Activated T-helper 2 cell treated with anti-CD3 and anti-CD28 coated beads, Interferon-gamma antibody, Interleukin-2, Interleukin-4, amounts not matched to agents 10 μg/mL and 5 μg/mL and 100 μg/mL, durations not matched to agents 14 hours and 24 hours and 36 hours (primary cell): ENCODE measurements at regions of chr15 and their contacts with region 1.

Region 1: DNA sequence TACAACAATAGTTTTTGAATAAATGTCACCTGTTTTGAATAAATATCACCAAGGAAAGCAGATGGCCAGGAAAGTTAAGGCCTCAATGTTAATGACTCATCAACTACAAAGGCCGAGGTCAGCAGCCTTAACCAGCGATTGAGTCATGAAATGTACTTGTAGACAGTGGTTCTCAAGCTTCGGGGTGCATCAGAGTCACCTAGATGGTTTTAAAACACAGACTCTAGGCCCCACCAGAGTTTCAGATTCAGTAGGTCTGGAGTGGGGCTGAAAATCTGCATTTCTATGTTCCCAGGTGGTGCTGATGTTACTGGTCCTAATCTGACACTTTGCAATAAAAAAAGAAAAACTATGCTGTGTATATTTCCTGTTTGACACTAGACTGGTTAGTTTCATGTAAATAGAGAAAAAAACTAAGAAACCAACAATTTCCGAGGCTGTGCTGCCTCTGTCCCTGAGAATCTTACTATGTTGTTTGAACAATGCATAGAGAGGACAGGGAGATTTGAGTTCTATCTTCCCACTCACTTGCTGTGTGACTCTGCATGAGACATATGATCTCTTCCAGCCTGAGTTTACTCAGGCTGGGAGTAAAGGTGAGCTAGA is 9.8 kb downstream of the RAB27A start:
- DNase-seq: peak; percentile 46
- H3K4me3 Mint-ChIP-seq: peak overlapping the region; percentile 63
- H3K27ac Mint-ChIP-seq: peak overlapping the region; percentile 98
- H3K4me1 Mint-ChIP-seq: peaks cover 88% of the 10 kb centered on the region
- H3K27me3 Mint-ChIP-seq: no peaks in the 10 kb centered on the region

Region 2: GRCh38 chr15:55221090-55222011 is 58.5 kb before region 1 on chr15:
- intact Hi-C with region 1: loop called (anchors 1 kb)
- DNase-seq: no peak
- H3K4me3 Mint-ChIP-seq: peak overlapping the region; percentile 23
- H3K27ac Mint-ChIP-seq: peak overlapping the region; percentile 89
- H3K4me1 Mint-ChIP-seq: peaks cover 61% of the 10 kb centered on the region
- H3K27me3 Mint-ChIP-seq: no peaks in the 10 kb centered on the region

Region 3: GRCh38 chr15:55255714-55256113 is 24.1 kb before region 1 on chr15:
- intact Hi-C with region 1: loop called (anchors 1 kb)
- DNase-seq: no peak
- H3K4me3 Mint-ChIP-seq: peak overlapping the region; percentile 72
- H3K27ac Mint-ChIP-seq: peak overlapping the region; percentile 82
- H3K4me1 Mint-ChIP-seq: peaks cover 66% of the 10 kb centered on the region
- H3K27me3 Mint-ChIP-seq: no peaks in the 10 kb centered on the region

Region 4: DNA sequence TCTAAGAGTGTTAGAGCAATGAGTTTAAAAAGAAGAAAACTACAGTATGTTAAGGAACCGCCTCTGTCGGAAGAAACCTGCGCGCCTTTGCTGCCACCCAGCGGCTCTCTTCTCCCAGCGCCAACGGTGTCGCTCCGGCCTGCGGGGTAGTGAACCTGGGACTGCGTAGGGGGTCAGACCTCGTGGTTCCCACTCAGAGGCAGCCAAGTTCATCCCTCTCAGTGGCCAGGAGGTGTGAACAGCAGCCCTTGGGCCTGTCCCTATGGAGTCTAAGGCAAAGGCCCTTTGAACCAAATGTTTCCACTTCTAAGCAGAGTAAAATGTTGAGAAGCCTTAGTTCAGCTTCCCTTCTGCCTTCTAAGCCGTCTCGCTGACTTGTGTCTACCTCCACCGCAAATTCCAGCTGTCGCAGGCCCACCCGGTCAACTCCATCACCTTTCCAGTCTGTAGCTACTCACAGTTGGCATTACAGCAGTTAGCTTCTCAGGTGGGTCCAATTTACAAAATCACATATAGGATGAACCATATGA is 10.7 kb after region 1 on chr15:
- intact Hi-C with region 1: loop called (anchors 1 kb)
- DNase-seq: peak; percentile 77
- H3K4me3 Mint-ChIP-seq: peak overlapping the region; percentile 78
- H3K27ac Mint-ChIP-seq: peak overlapping the region; percentile 83
- H3K4me1 Mint-ChIP-seq: peaks cover 31% of the 10 kb centered on the region
- H3K27me3 Mint-ChIP-seq: no peaks in the 10 kb centered on the region

Region 5: GRCh38 chr15:55661428-55661827 is 381.6 kb after region 1 on chr15:
- intact Hi-C with region 1: loop called (anchors 1 kb)
- DNase-seq: no peak
- H3K4me3 Mint-ChIP-seq: no peak overlapping the region
- H3K27ac Mint-ChIP-seq: peak overlapping the region; percentile 78
- H3K4me1 Mint-ChIP-seq: peaks cover 30% of the 10 kb centered on the region
- H3K27me3 Mint-ChIP-seq: no peaks in the 10 kb centered on the region